ENCODE measurements at regions of chr1 and their contacts with region 1.

Region 1: GRCh38 chr1:211133836-211134669 is at the start of gene KCNH1:
- DNase-seq: peak; percentile 86
- ATAC-seq: peak; percentile 93
- H3K4me3 Mint-ChIP-seq: peak within 1 kb of the TSS; percentile 40
- H3K27ac Mint-ChIP-seq: no peak within 1 kb of the TSS
- H3K4me1 Mint-ChIP-seq: peaks cover 7% of the 10 kb centered on the region
- H3K27me3 Mint-ChIP-seq: peaks cover 82% of the 10 kb centered on the region
- total RNA-seq, gene KCNH1: not detected

Region 2: GRCh38 chr1:210407207-210407886 is 726.7 kb before region 1 on chr1:
- CTCF ChIA-PET with region 1: interaction called, 38 read pairs
- DNase-seq: peak; percentile 72
- ATAC-seq: peak; percentile 51
- H3K4me3 Mint-ChIP-seq: no peak overlapping the region
- H3K27ac Mint-ChIP-seq: no peak overlapping the region
- H3K4me1 Mint-ChIP-seq: peaks cover 2% of the 10 kb centered on the region
- H3K27me3 Mint-ChIP-seq: peaks cover 7% of the 10 kb centered on the region

Region 3: DNA sequence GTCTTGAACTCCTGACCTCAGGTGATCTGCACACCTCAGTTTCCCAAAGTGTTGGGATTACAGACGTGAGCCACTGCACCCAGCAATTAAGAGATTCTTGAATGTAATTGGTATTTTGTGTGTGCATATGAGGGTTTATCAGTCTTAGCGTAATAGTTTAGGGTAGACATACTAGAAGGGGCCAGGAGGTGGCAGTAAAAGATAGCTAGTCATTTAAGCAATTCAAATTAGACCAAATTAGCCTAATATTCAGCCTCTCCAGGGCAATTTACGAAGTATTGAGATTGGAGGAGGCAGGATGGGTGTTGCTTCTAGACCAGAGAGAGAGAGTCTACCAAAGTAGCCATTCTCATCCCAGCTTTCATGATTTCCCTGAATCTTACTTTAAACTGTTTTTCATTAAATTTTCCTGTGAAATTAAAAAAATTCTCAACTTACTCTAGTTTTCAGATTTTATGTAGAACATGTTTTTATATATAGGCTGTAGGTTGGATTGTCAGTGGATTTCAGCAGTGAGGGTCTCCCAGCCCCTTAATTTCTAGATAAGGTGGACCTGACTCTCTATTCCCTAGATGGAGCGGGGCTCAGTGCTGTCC is 685.7 kb before region 1 on chr1:
- CTCF ChIA-PET with region 1: interaction called, 44 read pairs
- DNase-seq: no peak
- ATAC-seq: no peak
- H3K4me3 Mint-ChIP-seq: no peak overlapping the region
- H3K27ac Mint-ChIP-seq: no peak overlapping the region
- H3K4me1 Mint-ChIP-seq: peaks cover 17% of the 10 kb centered on the region
- H3K27me3 Mint-ChIP-seq: peaks cover 14% of the 10 kb centered on the region

Region 4: GRCh38 chr1:210584439-210585113 is 549.5 kb before region 1 on chr1:
- CTCF ChIA-PET with region 1: interaction called, 69 read pairs
- DNase-seq: peak; percentile 86
- ATAC-seq: peak; percentile 90
- H3K4me3 Mint-ChIP-seq: no peak overlapping the region
- H3K27ac Mint-ChIP-seq: no peak overlapping the region
- H3K4me1 Mint-ChIP-seq: peaks cover 10% of the 10 kb centered on the region
- H3K27me3 Mint-ChIP-seq: no peaks in the 10 kb centered on the region

Region 5: GRCh38 chr1:211169353-211169752 is 35.3 kb after region 1 on chr1:
- CTCF ChIA-PET with region 1: no interaction called
- DNase-seq: no peak
- ATAC-seq: no peak
- H3K4me3 Mint-ChIP-seq: no peak overlapping the region
- H3K27ac Mint-ChIP-seq: no peak overlapping the region
- H3K4me1 Mint-ChIP-seq: no peaks in the 10 kb centered on the region
- H3K27me3 Mint-ChIP-seq: peaks cover 25% of the 10 kb centered on the region

Measured in activated CD8-positive, alpha-beta memory T cell treated with anti-CD3 and anti-CD28 coated beads, Interleukin-2, amount 10 ng/mL, durations not matched to agents 7 days and 5 days (primary cell).